Activated CD4-positive, alpha-beta T cell treated with anti-CD3 and anti-CD28 coated beads for 36 hours (primary cell): ENCODE measurements at regions of chr12 and their contacts with region 1.

Region 1: GRCh38 chr12:94318181-94318580 is 141.5 kb downstream of the CEP83 start:
- DNase-seq: no peak
- ATAC-seq: no peak
- H3K4me3 Mint-ChIP-seq: no peak overlapping the region
- H3K27ac Mint-ChIP-seq: no peak overlapping the region
- H3K4me1 Mint-ChIP-seq: no peaks in the 10 kb centered on the region
- H3K27me3 Mint-ChIP-seq: no peaks in the 10 kb centered on the region

Region 2: GRCh38 chr12:94304566-94305061 is 13.6 kb before region 1 on chr12:
- CTCF ChIA-PET with region 1: no interaction called
- POLR2A ChIA-PET with region 1: no interaction called
- intact Hi-C with region 1: no loop called
- DNase-seq: no peak
- ATAC-seq: no peak
- H3K4me3 Mint-ChIP-seq: no peak overlapping the region
- H3K27ac Mint-ChIP-seq: peak overlapping the region; percentile 8
- H3K4me1 Mint-ChIP-seq: peaks cover 30% of the 10 kb centered on the region
- H3K27me3 Mint-ChIP-seq: no peaks in the 10 kb centered on the region

Region 3: DNA sequence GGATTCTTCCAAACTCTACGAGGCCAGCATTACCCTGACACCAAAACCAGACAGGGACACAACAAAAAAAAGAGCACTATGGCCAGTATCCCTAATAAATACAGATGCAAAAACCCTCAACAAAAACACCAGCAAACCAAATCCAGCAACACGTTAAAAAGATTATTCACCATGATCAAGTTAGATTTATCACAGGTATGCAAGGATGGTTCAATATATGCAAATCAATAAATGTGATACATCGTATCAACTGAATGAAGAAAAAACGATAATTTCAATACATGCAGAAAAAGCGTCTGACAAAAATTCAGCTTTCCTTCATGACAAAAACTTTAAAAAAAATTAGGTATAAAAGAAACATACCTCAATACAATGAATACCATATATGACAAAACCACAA is 41.6 kb after region 1 on chr12:
- CTCF ChIA-PET with region 1: no interaction called
- POLR2A ChIA-PET with region 1: no interaction called
- intact Hi-C with region 1: loop called in 1 of 2 experiments (anchors 5 kb)
- DNase-seq: no peak
- ATAC-seq: no peak
- H3K4me3 Mint-ChIP-seq: no peak overlapping the region
- H3K27ac Mint-ChIP-seq: no peak overlapping the region
- H3K4me1 Mint-ChIP-seq: no peaks in the 10 kb centered on the region
- H3K27me3 Mint-ChIP-seq: no peaks in the 10 kb centered on the region